SK-N-SH (cell line): ENCODE measurements at regions of chr2 and their contacts with region 1.

Region 1: GRCh38 chr2:230847883-230848388 is 16.8 kb upstream of the ITM2C start:
- DNase-seq: peak; percentile 89
- H3K4me3 ChIP-seq: peak overlapping the region in 1 of 2 experiments; percentile 32; a peak in 1 of 4 replicates
- H3K27ac ChIP-seq: no peak overlapping the region
- H3K4me1 ChIP-seq: no peaks in the 10 kb centered on the region; a peak in 1 of 4 replicates
- H3K27me3 ChIP-seq: peaks cover 2% of the 10 kb centered on the region; the same call in 1 of the 2 replicates
- CTCF ChIP-seq: peak; percentile 84
- EP300 ChIP-seq: 0 out of 4 replicates have a peak, but pooled peaks of 1 of the 2 experiments have one; percentile 13
- RAD21 ChIP-seq: peak; percentile 76

Region 2: DNA sequence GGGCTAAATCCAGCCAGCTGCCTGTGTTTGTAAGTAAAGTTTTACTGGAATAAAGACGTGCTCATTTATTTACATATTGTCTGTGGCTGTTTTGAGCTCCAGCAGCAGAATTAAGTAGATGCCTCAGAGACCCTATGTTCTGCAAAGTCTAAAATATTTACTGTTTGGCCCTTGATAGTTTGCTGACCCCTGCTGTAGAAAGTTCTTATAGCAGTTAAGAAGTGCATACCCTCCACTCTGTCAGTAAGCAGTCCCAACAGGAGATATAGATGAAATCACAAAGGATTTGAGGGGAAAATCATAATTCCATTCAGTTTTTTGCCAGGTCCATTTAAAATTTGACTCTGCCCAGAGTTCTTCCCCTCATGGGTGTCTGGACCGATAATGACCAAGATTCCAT is 33.3 kb before region 1 on chr2:
- CTCF ChIA-PET with region 1: interaction called, 10 read pairs
- POLR2A ChIA-PET with region 1: no interaction called
- DNase-seq: no peak
- H3K4me3 ChIP-seq: no peak overlapping the region
- H3K27ac ChIP-seq: no peak overlapping the region
- H3K4me1 ChIP-seq: no peaks in the 10 kb centered on the region
- H3K27me3 ChIP-seq: no peaks in the 10 kb centered on the region
- CTCF ChIP-seq: peak; percentile 59
- EP300 ChIP-seq: no peak
- RAD21 ChIP-seq: peak; percentile 43

Region 3: GRCh38 chr2:230824406-230824978 is 23.4 kb before region 1 on chr2:
- CTCF ChIA-PET with region 1: interaction called, 27 read pairs
- POLR2A ChIA-PET with region 1: no interaction called
- DNase-seq: peak; percentile 83
- H3K4me3 ChIP-seq: peak overlapping the region in 1 of 2 experiments; percentile 33; a peak in 2 of 4 replicates
- H3K27ac ChIP-seq: no peak overlapping the region
- H3K4me1 ChIP-seq: no peaks in the 10 kb centered on the region; a peak in 1 of 4 replicates
- H3K27me3 ChIP-seq: no peaks in the 10 kb centered on the region
- CTCF ChIP-seq: peak; percentile 72
- EP300 ChIP-seq: no peak
- RAD21 ChIP-seq: peak; percentile 94

Region 4: DNA sequence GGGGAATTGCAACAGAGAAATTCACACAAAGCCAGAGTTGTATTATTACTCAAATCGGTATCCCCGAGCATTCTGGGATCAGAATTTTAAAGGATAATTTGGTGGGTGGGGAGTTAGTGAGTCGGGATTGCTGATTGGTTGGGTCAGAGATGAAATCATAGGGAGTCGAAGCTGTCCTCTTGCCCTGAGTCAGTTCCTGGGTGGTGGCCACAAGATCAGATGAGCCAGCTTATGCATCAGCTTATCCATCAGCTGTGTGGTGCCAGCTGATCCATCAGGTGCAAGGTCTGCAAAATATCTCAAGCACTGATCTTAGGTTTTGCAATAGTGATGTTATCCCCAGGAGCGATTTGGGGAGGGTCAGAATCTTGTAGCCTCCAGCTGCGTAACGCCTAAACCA is 17.5 kb before region 1 on chr2:
- CTCF ChIA-PET with region 1: interaction called, 26 read pairs
- POLR2A ChIA-PET with region 1: no interaction called
- DNase-seq: no peak
- H3K4me3 ChIP-seq: no peak overlapping the region
- H3K27ac ChIP-seq: no peak overlapping the region
- H3K4me1 ChIP-seq: no peaks in the 10 kb centered on the region
- H3K27me3 ChIP-seq: peaks cover 7% of the 10 kb centered on the region; the same call in 1 of the 2 replicates
- CTCF ChIP-seq: no peak
- EP300 ChIP-seq: no peak
- RAD21 ChIP-seq: no peak

Region 5: DNA sequence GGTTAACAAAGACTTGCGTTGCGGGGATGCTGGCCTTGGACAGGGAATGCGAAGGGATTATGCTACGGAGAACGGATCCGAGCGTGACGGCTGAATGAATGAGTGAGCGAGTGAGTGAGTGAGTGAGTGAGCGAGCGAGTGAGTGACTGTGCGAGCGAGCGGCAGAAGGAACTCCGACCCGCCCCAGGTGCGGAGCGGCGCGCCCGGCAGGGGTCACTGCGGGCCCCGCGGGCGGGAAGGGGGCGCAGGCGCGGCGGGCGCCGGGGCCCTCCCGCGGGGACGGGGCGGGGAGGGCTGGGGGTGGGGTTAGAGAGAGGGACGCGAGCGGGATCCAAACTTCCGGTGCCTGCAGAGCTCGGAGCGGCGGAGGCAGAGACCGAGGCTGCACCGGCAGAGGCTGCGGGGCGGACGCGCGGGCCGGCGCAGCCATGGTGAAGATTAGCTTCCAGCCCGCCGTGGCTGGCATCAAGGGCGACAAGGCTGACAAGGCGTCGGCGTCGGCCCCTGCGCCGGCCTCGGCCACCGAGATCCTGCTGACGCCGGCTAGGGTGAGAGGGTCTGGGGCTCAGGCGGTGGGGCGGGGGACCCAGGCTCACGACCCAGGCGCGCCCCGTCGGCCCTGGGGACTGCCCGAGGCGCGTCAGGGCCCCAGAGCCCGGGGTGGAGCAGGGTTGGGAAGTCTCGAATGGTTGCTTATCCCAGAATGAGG is 16.8 kb after region 1 on chr2 and contains the start of gene ITM2C:
- CTCF ChIA-PET with region 1: interaction called, 45 read pairs
- POLR2A ChIA-PET with region 1: interaction called, 3 read pairs
- DNase-seq: peak; percentile 98
- H3K4me3 ChIP-seq: peak within 1 kb of the TSS; percentile 89 to 95
- H3K27ac ChIP-seq: peak within 1 kb of the TSS in 1 of 2 experiments; percentile 86; a peak in 2 of 4 replicates
- H3K4me1 ChIP-seq: peaks cover 27 to 41% of the 10 kb centered on the region in 2 experiments
- H3K27me3 ChIP-seq: no peaks in the 10 kb centered on the region; the same call in 1 of the 2 replicates
- CTCF ChIP-seq: peak; percentile 54
- EP300 ChIP-seq: no peak
- RAD21 ChIP-seq: peak; percentile 39; the same call in 1 of the 2 replicates
- polyA plus RNA-seq, gene ITM2C: 288 and 290 TPM in 2 replicates

Region 6: GRCh38 chr2:230902180-230902899 is 54.4 kb after region 1 on chr2:
- CTCF ChIA-PET with region 1: interaction called, 10 read pairs
- POLR2A ChIA-PET with region 1: no interaction called
- DNase-seq: peak; percentile 49
- H3K4me3 ChIP-seq: no peak overlapping the region
- H3K27ac ChIP-seq: no peak overlapping the region
- H3K4me1 ChIP-seq: no peaks in the 10 kb centered on the region; a peak in 1 of 4 replicates
- H3K27me3 ChIP-seq: peaks cover 19% of the 10 kb centered on the region; the same call in 1 of the 2 replicates
- CTCF ChIP-seq: peak; percentile 67
- EP300 ChIP-seq: no peak
- RAD21 ChIP-seq: peak; percentile 63

Region 7: GRCh38 chr2:231007286-231008007 is 159.5 kb after region 1 on chr2:
- CTCF ChIA-PET with region 1: interaction called, 10 read pairs
- POLR2A ChIA-PET with region 1: no interaction called
- DNase-seq: no peak
- H3K4me3 ChIP-seq: no peak overlapping the region
- H3K27ac ChIP-seq: no peak overlapping the region
- H3K4me1 ChIP-seq: no peaks in the 10 kb centered on the region
- H3K27me3 ChIP-seq: peaks cover 14% of the 10 kb centered on the region; the same call in 1 of the 2 replicates
- CTCF ChIP-seq: no peak
- EP300 ChIP-seq: no peak
- RAD21 ChIP-seq: no peak